CD8-positive, alpha-beta T cell (primary cell): ENCODE measurements at regions of chr11 and their contacts with region 1.

Region 1: DNA sequence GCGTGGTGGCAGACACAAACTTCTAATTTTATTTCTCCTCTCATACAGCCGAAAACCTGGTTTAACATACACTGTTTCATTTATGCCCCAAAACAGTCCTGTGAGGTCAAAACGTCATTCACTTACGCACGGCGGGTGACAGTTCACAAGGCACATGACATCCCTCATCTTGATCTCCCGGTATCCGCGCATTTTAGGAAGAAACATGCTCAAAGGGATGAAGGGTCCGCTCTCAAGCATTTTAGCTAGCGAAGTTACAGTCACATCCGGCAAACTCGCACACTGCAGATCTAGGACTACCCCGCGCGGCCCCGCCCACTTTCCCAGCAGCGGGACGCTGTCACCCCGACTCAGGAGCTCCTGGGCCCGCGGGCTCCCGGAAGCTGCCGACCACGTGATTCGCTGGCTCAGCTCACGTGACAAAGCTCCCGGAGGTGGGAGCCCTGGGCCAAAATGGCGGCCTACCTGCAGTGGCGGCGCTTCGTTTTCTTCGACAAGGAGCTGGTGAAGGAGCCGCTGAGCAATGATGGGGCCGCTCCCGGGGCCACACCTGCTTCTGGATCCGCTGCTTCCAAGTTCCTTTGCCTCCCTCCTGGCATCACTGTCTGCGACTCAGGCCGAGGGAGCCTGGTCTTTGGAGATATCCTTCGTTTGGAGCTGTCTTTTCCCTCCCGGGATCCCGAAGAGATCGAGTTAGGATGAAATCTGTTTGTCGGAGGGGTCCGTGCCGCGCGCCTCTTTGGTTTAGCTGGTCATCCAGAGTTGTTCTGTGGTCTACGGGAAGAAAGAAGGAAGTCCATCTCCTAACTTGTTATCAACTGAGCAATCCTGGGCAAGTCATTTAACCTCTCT is at the start of gene VPS11:
- DNase-seq: peak; percentile 94 to 99 (median 98)
- ATAC-seq: peak; percentile 92
- H3K4me3 ChIP-seq: peak within 1 kb of the TSS; percentile 83 to 88
- H3K4me3 Mint-ChIP-seq: peak within 1 kb of the TSS; percentile 89
- H3K27ac ChIP-seq: peak within 1 kb of the TSS; percentile 79 to 94
- H3K27ac Mint-ChIP-seq: peak within 1 kb of the TSS; percentile 97
- H3K4me1 ChIP-seq: peaks cover 29% of the 10 kb centered on the region
- H3K4me1 Mint-ChIP-seq: peaks cover 51% of the 10 kb centered on the region
- H3K27me3 ChIP-seq: no peaks in the 10 kb centered on the region
- H3K27me3 Mint-ChIP-seq: no peaks in the 10 kb centered on the region
- CTCF ChIP-seq: no peak
- total RNA-seq, gene VPS11: 91.0 to 109 TPM

Region 2: GRCh38 chr11:118997627-118998387 is 69.8 kb before region 1 on chr11 and contains the start of gene CENATAC:
- CTCF ChIA-PET with region 1: no interaction called
- POLR2A ChIA-PET with region 1: no interaction called
- intact Hi-C with region 1: loop called in 1 of 2 experiments (anchors 5 kb)
- DNase-seq: peak; percentile 87 to 97 (median 96)
- ATAC-seq: peak; percentile 94
- H3K4me3 ChIP-seq: peak within 1 kb of the TSS; percentile 89 to 95
- H3K4me3 Mint-ChIP-seq: peak within 1 kb of the TSS; percentile 84
- H3K27ac ChIP-seq: peak within 1 kb of the TSS; percentile 59 to 92
- H3K27ac Mint-ChIP-seq: peak within 1 kb of the TSS; percentile 88
- H3K4me1 ChIP-seq: peaks cover 23% of the 10 kb centered on the region
- H3K4me1 Mint-ChIP-seq: peaks cover 36% of the 10 kb centered on the region
- H3K27me3 ChIP-seq: no peaks in the 10 kb centered on the region
- H3K27me3 Mint-ChIP-seq: no peaks in the 10 kb centered on the region
- CTCF ChIP-seq: no peak
- total RNA-seq, gene CENATAC: 103 to 116 TPM

Region 3: GRCh38 chr11:119030329-119031049 is 37.1 kb before region 1 on chr11 and contains the start of gene SLC37A4:
- CTCF ChIA-PET with region 1: no interaction called
- POLR2A ChIA-PET with region 1: interaction called, 7 read pairs
- intact Hi-C with region 1: loop called (anchors 1 to 2 kb)
- DNase-seq: peak; percentile 97 to 100 (median 99)
- ATAC-seq: peak; percentile 93
- H3K4me3 ChIP-seq: peak within 1 kb of the TSS; percentile 94 to 99
- H3K4me3 Mint-ChIP-seq: peak within 1 kb of the TSS; percentile 89
- H3K27ac ChIP-seq: peak within 1 kb of the TSS; percentile 65 to 71
- H3K27ac Mint-ChIP-seq: peak within 1 kb of the TSS; percentile 88
- H3K4me1 ChIP-seq: peaks cover 13% of the 10 kb centered on the region
- H3K4me1 Mint-ChIP-seq: peaks cover 18% of the 10 kb centered on the region
- H3K27me3 ChIP-seq: no peaks in the 10 kb centered on the region
- H3K27me3 Mint-ChIP-seq: no peaks in the 10 kb centered on the region
- CTCF ChIP-seq: peak; percentile 34
- total RNA-seq, gene SLC37A4: 4.0 to 4.6 TPM

Region 4: GRCh38 chr11:119084663-119085436 is 17.3 kb after region 1 on chr11 and contains the start of gene HMBS:
- CTCF ChIA-PET with region 1: interaction called, 5 read pairs
- POLR2A ChIA-PET with region 1: interaction called, 18 read pairs
- intact Hi-C with region 1: loop called (anchors 1 kb)
- DNase-seq: peak; percentile 78 to 97 (median 92)
- ATAC-seq: peak; percentile 93
- H3K4me3 ChIP-seq: peak within 1 kb of the TSS; percentile 92
- H3K4me3 Mint-ChIP-seq: peak within 1 kb of the TSS; percentile 91
- H3K27ac ChIP-seq: peak within 1 kb of the TSS; percentile 75 to 86
- H3K27ac Mint-ChIP-seq: peak within 1 kb of the TSS; percentile 93
- H3K4me1 ChIP-seq: peaks cover 18% of the 10 kb centered on the region
- H3K4me1 Mint-ChIP-seq: peaks cover 20% of the 10 kb centered on the region
- H3K27me3 ChIP-seq: no peaks in the 10 kb centered on the region
- H3K27me3 Mint-ChIP-seq: no peaks in the 10 kb centered on the region
- CTCF ChIP-seq: no peak
- total RNA-seq, gene HMBS: 5.4 to 6.4 TPM

Region 5: DNA sequence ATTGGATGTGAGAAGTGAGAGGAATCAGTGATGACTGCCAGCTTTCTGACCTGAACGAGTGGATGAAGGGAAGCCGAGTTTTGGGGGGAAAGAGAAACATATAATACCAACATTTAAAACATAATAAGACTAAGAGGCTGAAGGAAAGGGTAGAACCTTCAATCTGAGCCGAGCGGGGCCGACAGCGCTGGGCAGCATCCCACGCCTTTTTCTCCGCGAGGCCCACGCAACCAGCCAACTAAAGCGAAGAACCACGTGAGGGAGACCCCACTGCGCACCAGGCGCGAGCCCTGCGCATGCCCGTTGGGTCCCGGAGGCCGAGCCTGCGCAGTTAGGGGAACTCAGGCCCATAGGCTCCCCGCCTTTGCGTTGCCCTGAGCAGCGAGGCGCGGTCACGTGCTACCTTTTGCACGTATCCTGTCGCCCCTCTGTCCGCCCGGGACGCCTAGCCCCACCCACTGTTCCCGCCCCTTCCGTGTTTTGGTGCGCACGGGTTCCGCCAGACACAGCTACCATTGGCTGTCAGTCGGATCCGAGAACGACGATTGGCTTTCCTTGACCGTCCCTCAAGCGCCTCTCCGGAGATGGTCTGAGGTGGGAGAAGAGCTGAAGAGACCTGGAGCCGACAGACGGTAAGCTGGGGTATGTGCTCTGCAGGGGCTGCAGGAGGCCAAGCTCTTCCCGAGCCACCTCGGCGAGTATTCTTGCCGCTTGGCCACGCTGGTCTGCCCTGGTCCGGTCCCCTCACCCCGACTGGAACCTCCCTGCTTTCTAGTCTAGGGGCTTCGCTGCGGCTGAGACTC is 53.6 kb after region 1 on chr11 and contains the start of gene HINFP:
- CTCF ChIA-PET with region 1: interaction called, 3 read pairs
- POLR2A ChIA-PET with region 1: interaction called, 18 read pairs
- intact Hi-C with region 1: loop called (anchors 1 kb)
- DNase-seq: peak; percentile 100
- ATAC-seq: peak; percentile 97
- H3K4me3 ChIP-seq: peak within 1 kb of the TSS; percentile 81 to 93
- H3K4me3 Mint-ChIP-seq: peak within 1 kb of the TSS; percentile 87
- H3K27ac ChIP-seq: peak within 1 kb of the TSS; percentile 69 to 80
- H3K27ac Mint-ChIP-seq: peak within 1 kb of the TSS; percentile 92
- H3K4me1 ChIP-seq: peaks cover 24% of the 10 kb centered on the region
- H3K4me1 Mint-ChIP-seq: peaks cover 43% of the 10 kb centered on the region
- H3K27me3 ChIP-seq: no peaks in the 10 kb centered on the region
- H3K27me3 Mint-ChIP-seq: no peaks in the 10 kb centered on the region
- CTCF ChIP-seq: no peak
- total RNA-seq, gene HINFP: 17.0 to 19.5 TPM

Region 6: GRCh38 chr11:119323538-119324033 is 256.0 kb after region 1 on chr11:
- CTCF ChIA-PET with region 1: interaction called, 5 read pairs
- POLR2A ChIA-PET with region 1: interaction called, 5 read pairs
- intact Hi-C with region 1: loop called in 1 of 2 experiments (anchors 5 kb)
- DNase-seq: peak; percentile 65 to 88 (median 76)
- ATAC-seq: peak; percentile 18
- H3K4me3 ChIP-seq: no peak overlapping the region
- H3K4me3 Mint-ChIP-seq: no peak overlapping the region
- H3K27ac ChIP-seq: no peak overlapping the region
- H3K27ac Mint-ChIP-seq: no peak overlapping the region
- H3K4me1 ChIP-seq: peaks cover 11% of the 10 kb centered on the region
- H3K4me1 Mint-ChIP-seq: peaks cover 26% of the 10 kb centered on the region
- H3K27me3 ChIP-seq: peaks cover 0 to 2% of the 10 kb centered on the region in 2 experiments
- H3K27me3 Mint-ChIP-seq: peaks cover 1% of the 10 kb centered on the region
- CTCF ChIP-seq: peak; percentile 77